ENCODE measurements at regions of chr6 and their contacts with region 1.

Region 1: DNA sequence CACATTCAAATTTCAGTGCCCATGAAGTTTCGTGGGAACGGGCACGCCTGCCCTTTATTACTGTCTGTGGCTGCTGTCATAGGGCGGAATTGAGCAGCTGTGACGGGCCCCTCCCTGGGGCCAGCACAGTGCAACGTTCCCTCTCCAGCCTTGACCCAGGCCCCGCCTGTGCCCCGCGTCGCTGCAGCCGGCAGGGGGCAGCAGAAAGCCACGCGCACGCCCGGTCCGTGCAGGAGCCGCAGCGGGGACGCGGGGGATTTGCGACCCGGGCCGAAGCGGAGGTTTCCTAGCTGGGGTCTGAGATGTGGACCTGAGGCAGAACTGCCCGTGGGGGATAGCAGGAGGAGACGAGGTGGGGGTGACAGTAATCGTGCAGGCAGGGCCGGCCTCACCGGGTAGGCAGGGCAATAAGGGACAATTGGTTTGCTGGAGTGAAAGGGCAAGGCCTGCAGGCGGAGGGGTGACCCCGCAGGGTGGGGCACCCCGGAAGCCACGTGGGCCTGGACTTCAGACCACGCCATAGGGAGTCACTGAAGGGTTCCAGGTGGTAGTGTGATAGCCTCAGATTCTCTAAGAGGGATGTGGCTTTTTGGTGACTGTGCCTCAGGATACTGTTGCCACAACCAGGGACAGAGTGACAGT is 54.4 kb downstream of the SYTL3 start:
- DNase-seq: peak; percentile 95
- H3K4me3 Mint-ChIP-seq: peak overlapping the region; percentile 77
- H3K27ac Mint-ChIP-seq: peak overlapping the region; percentile 59
- H3K4me1 Mint-ChIP-seq: peaks cover 26% of the 10 kb centered on the region
- H3K27me3 Mint-ChIP-seq: no peaks in the 10 kb centered on the region

Region 2: GRCh38 chr6:158185729-158186456 is 518.4 kb before region 1 on chr6:
- intact Hi-C with region 1: no loop called
- DNase-seq: no peak
- H3K4me3 Mint-ChIP-seq: no peak overlapping the region
- H3K27ac Mint-ChIP-seq: peak overlapping the region; percentile 50
- H3K4me1 Mint-ChIP-seq: peaks cover 29% of the 10 kb centered on the region
- H3K27me3 Mint-ChIP-seq: no peaks in the 10 kb centered on the region

Region 3: GRCh38 chr6:158718461-158719046 is 14.3 kb after region 1 on chr6:
- intact Hi-C with region 1: loop called (anchors 2 kb)
- DNase-seq: no peak
- H3K4me3 Mint-ChIP-seq: no peak overlapping the region
- H3K27ac Mint-ChIP-seq: no peak overlapping the region
- H3K4me1 Mint-ChIP-seq: peaks cover 58% of the 10 kb centered on the region
- H3K27me3 Mint-ChIP-seq: no peaks in the 10 kb centered on the region

Region 4: GRCh38 chr6:158769771-158770432 is 65.6 kb after region 1 on chr6:
- intact Hi-C with region 1: loop called (anchors 5 kb)
- DNase-seq: no peak
- H3K4me3 Mint-ChIP-seq: no peak overlapping the region
- H3K27ac Mint-ChIP-seq: peak overlapping the region; percentile 77
- H3K4me1 Mint-ChIP-seq: peaks cover 35% of the 10 kb centered on the region
- H3K27me3 Mint-ChIP-seq: no peaks in the 10 kb centered on the region

Region 5: GRCh38 chr6:158972241-158973233 is 268.2 kb after region 1 on chr6:
- intact Hi-C with region 1: loop called (anchors 1 kb)
- DNase-seq: peak; percentile 63
- H3K4me3 Mint-ChIP-seq: no peak overlapping the region
- H3K27ac Mint-ChIP-seq: no peak overlapping the region
- H3K4me1 Mint-ChIP-seq: peaks cover 4% of the 10 kb centered on the region
- H3K27me3 Mint-ChIP-seq: peaks cover 2% of the 10 kb centered on the region

Measured in activated CD4-positive, alpha-beta T cell treated with anti-CD3 and anti-CD28 coated beads, Interleukin-2, amount 10 ng/mL, durations not matched to agents 24 days and 14 days (primary cell).